Mammary epithelial cell (primary cell): ENCODE measurements at regions of chr2 and their contacts with region 1.

Region 1: DNA sequence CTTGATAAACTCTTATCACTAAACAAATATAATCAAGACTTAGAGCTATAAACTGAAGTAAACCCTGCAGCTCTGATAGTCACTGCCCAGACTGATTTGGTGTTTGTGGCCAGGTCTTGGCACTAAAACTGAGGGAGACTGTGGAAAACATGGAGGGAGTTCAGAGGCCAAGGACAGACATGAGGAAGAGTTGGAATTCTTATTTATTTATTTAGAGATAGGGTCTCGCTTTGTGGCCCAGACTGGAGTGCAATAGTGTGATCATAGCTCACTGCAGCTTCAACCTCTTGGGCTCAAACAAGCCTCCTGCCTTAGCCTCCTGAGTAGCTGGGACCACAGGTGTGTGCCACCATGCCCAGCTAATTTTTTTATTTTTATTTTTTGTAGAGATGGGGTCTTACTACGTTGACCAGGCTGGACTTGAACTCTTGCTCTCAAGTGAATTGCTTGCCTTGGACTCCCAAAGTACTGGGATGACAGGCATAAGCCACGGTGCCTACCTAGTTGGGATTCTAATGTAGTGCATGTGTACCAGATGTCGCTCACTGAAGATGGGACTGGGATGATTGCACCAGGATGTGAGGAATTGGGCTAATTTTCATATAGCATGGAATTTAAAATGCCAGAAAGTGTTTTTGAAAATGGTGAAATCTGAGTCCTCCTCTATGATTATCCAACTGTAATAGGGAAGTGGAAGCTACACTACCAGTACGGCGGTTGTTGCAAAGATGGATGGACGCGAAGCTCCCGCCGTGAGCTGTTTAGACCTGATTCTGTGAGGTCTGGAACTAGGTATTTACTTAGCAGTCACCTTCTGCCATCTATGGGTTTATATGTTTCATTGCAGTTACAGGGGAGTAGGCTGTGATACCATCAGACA is 52.7 kb upstream of the CTLA4 start:
- DNase-seq: peak; percentile 62
- H3K4me3 ChIP-seq: no peak overlapping the region
- H3K27ac ChIP-seq: no peak overlapping the region
- H3K4me1 ChIP-seq: peaks cover 12% of the 10 kb centered on the region
- H3K27me3 ChIP-seq: no peaks in the 10 kb centered on the region
- CTCF ChIP-seq: peak; percentile 80 to 83

Region 2: GRCh38 chr2:202831242-202832220 is 983.4 kb before region 1 on chr2:
- CTCF ChIA-PET with region 1: no interaction called
- dilution Hi-C with region 1: no loop called
- in situ Hi-C with region 1: no loop called
- intact Hi-C with region 1: loop called (anchors 1 kb)
- DNase-seq: peak; percentile 64
- H3K4me3 ChIP-seq: no peak overlapping the region
- H3K27ac ChIP-seq: no peak overlapping the region
- H3K4me1 ChIP-seq: no peaks in the 10 kb centered on the region
- H3K27me3 ChIP-seq: no peaks in the 10 kb centered on the region
- CTCF ChIP-seq: peak; percentile 66 to 70

Region 3: GRCh38 chr2:203453858-203454451 is 360.9 kb before region 1 on chr2:
- CTCF ChIA-PET with region 1: no interaction called
- dilution Hi-C with region 1: no loop called
- in situ Hi-C with region 1: no loop called
- intact Hi-C with region 1: loop called (anchors 10 kb)
- DNase-seq: peak; percentile 21
- H3K4me3 ChIP-seq: no peak overlapping the region
- H3K27ac ChIP-seq: no peak overlapping the region
- H3K4me1 ChIP-seq: peaks cover 5% of the 10 kb centered on the region
- H3K27me3 ChIP-seq: no peaks in the 10 kb centered on the region
- CTCF ChIP-seq: peak; percentile 72 to 76

Region 4: DNA sequence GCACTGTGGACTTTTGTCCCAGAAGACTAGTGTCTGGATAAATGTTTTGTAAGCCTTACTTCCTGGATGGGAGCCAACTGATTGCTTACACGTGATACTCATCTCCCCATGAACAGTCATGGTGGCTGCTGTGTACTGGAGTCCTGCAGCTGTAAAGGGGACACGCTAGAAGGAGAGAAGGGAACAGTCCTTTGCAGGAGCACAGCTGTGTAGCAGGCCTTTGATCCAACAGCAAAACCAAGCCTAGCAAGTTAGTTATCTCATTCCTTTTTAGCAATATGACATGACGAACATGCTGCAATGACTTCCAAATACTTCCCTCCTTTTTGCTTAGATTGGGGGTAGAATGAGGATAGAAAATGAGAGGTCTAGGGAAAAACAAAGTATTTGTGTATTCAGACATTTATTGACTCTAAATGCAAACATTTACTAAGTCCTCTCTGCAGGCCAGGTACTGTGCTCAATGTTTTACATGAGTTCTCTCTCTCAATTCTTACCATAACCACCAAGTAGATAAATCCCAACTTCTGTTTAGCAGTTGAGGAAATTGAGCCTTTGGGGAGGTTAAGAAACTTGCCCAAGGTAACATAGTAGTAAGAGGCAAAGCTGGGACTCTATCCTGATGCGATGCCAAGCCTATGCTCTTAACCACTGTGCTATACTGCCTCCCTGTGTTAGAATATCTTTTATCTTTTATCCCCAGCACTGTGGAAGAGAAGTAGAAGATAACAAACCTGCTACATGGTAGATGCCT is 163.9 kb before region 1 on chr2:
- CTCF ChIA-PET with region 1: interaction called, 3 read pairs
- dilution Hi-C with region 1: no loop called
- in situ Hi-C with region 1: no loop called
- intact Hi-C with region 1: loop called (anchors 1 kb)
- DNase-seq: peak; percentile 68
- H3K4me3 ChIP-seq: no peak overlapping the region
- H3K27ac ChIP-seq: peak overlapping the region; percentile 89
- H3K4me1 ChIP-seq: peaks cover 26% of the 10 kb centered on the region
- H3K27me3 ChIP-seq: no peaks in the 10 kb centered on the region
- CTCF ChIP-seq: peak; percentile 50 to 61

Region 5: GRCh38 chr2:203692031-203692710 is 122.7 kb before region 1 on chr2:
- CTCF ChIA-PET with region 1: no interaction called
- dilution Hi-C with region 1: no loop called
- in situ Hi-C with region 1: no loop called
- intact Hi-C with region 1: no loop called
- DNase-seq: no peak
- H3K4me3 ChIP-seq: no peak overlapping the region
- H3K27ac ChIP-seq: no peak overlapping the region
- H3K4me1 ChIP-seq: peaks cover 6% of the 10 kb centered on the region
- H3K27me3 ChIP-seq: no peaks in the 10 kb centered on the region
- CTCF ChIP-seq: no peak

Region 6: GRCh38 chr2:203759690-203760365 is 55.1 kb before region 1 on chr2:
- CTCF ChIA-PET with region 1: no interaction called
- dilution Hi-C with region 1: no loop called
- in situ Hi-C with region 1: no loop called
- intact Hi-C with region 1: loop called (anchors 2 kb)
- DNase-seq: peak; percentile 93
- H3K4me3 ChIP-seq: no peak overlapping the region
- H3K27ac ChIP-seq: peak overlapping the region; percentile 67
- H3K4me1 ChIP-seq: peaks cover 25% of the 10 kb centered on the region
- H3K27me3 ChIP-seq: no peaks in the 10 kb centered on the region
- CTCF ChIP-seq: no peak